ENCODE measurements at regions of chr19 and their contacts with region 1.

Region 1: DNA sequence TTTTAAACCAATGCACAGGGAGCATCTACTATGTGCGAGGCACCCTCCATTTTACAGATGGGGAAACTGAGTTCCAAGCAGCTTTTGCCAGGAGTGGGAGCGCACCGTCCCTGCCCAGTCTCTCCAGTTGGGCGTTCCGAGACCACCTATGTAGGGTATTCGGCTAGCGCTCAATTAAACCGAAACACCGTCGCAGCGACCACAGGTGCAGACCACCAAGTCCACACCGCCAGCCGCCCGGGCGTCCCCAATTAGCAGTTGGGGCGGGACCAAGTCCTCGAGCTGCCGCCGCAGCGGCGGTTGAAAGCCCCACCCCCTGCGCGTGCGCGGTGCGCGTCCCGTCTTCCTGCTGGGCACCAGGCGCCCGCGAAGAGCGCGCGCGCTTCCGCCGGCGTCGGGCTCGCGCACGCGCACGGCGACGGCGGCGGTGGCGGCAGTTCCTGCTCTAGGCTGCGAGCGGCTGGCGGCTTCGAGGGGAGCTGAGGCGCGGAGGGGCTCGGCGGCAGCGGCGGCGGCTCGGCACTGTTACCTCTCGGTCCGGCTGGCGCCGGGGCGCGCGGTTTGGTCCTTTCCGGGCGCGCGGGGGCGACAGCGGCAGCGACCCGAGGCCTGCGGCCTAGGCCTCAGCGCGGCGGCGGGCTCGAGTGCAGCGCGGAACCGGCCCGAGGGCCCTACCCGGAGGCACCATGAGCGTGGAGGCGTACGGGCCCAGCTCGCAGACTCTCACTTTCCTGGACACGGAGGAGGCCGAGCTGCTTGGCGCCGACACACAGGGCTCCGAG is at the start of gene UPF1:
- DNase-seq: peak; percentile 96
- H3K4me3 Mint-ChIP-seq: peak within 1 kb of the TSS; percentile 96
- H3K27ac Mint-ChIP-seq: peak within 1 kb of the TSS; percentile 93
- H3K4me1 Mint-ChIP-seq: peaks cover 31% of the 10 kb centered on the region
- H3K27me3 Mint-ChIP-seq: no peaks in the 10 kb centered on the region
- total RNA-seq, gene UPF1: 71.7 to 77.2 TPM

Region 2: GRCh38 chr19:18683213-18683939 is 148.3 kb before region 1 on chr19 and contains the start of gene CRTC1:
- CTCF ChIA-PET with region 1: interaction called, 3 read pairs
- POLR2A ChIA-PET with region 1: no interaction called
- intact Hi-C with region 1: loop called (anchors 5 kb)
- DNase-seq: peak; percentile 94
- H3K4me3 Mint-ChIP-seq: peak within 1 kb of the TSS; percentile 87
- H3K27ac Mint-ChIP-seq: peak within 1 kb of the TSS; percentile 88
- H3K4me1 Mint-ChIP-seq: peaks cover 17% of the 10 kb centered on the region
- H3K27me3 Mint-ChIP-seq: no peaks in the 10 kb centered on the region
- total RNA-seq, gene CRTC1: 5.6 to 6.3 TPM

Measured in activated CD4-positive, alpha-beta memory T cell treated with anti-CD3 and anti-CD28 coated beads for 36 hours (primary cell).